Posterior vena cava (tissue), 2 donors: ENCODE measurements at regions of chr5 and their contacts with region 1.

Region 1: GRCh38 chr5:142808878-142809598 is 38.9 kb downstream of the ARHGAP26 start:
- DNase-seq: no peak

Region 2: DNA sequence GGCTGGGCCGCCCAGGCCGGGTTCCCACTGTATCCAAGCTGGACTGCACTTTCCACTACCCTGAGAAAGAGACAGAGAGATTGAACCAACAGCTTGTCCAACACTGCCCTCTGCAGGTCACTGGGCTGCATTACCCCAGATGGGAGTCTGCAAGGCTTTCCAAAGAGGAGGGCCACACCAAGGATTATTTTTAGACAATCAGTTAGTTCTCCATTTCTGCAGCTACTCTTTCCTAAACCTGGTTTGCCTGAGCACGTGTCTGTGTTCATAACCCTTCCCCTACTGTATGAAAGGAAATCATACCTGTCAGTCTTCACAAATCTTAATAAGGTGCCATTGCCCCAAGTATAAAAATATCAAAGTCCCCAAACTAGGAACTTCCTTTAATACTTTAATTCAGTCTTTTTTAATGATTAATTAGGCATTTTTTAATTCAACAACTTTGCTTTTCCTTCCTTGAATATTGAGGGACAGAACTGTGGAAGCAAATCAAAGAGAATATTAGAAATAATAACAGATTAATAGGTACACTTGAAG is 109.8 kb before region 1 on chr5:
- intact Hi-C with region 1: no loop called
- DNase-seq: peak; percentile 95

Region 3: DNA sequence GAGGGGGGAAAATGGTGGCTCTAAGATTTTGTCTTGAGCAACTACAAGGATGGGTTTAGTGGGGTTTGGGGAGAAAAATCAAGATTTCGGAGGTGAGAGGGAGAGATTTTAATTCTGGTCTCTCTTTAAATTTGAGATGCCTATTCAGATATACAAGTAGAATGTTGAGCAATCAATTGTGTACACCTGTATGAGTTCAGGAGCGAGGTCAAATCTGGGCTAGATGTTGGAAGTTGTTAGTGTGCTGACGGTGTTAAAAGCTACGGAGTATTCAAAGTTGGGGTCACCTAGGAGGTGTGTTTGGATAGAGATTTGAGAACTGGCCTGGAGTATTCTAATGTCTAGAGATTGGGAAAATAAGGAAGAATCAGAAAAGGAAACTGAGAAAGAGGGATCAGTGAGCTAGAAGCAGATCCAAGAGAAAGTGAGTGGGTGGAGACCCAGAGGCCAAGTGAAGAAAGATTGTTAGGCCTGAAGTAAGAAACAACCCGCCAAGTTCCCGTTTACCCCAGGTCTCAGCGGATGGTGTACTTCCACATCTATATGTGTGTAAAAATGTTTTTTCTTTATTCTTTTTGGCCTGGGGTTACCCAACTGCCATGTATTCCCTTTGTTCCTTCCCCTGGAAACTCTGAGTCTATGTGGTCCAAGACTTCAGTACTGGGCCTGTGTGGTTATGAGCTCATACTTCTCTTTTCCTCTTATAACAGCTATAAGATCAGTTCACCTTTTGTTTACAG is 50.8 kb before region 1 on chr5:
- intact Hi-C with region 1: loop called in 1 of 2 experiments (anchors 1 kb)
- DNase-seq: no peak

Region 4: GRCh38 chr5:142826741-142827732 is 18.0 kb after region 1 on chr5:
- intact Hi-C with region 1: loop called in 1 of 2 experiments (anchors 1 kb)
- DNase-seq: no peak